Left cardiac atrium (tissue), 4 donors: ENCODE measurements at regions of chr11 and their contacts with region 1.

Region 1: DNA sequence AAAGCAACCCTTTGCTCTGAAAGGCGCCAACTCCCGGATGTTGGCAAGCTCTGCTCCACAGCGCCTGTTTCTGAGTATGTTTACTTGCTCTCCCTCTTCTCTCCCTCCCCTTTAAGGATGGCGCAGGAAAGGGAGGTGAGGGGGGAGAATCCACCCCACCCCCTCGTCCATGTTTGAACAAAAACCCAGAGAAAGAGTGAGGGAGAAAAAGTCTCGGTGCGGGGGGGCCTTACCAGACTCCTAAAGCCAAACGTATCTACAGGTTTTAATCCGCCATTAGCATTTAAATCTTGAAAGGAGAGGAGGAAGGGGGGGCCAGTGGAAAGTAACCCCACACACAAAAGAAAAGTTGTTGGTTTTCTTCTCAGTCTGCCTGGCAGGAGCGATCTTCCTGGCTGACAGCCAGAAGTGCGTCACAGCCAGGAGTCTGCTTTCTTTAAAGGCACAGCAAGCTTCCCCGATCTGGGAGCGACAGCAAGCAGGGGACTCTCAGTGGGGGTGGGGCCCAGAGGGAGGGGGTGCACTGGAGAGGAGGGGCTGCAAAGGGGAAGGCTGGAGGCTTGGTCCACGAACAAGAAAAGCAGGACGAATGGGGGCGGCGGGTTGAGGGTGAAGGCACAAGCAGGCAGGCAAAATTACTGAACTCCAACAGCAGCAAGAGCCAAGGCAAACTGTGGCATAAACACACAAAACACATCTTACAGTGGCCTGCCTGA is 39.5 kb downstream of the NUMA1 start:
- DNase-seq: peak; percentile 96
- ATAC-seq: peak; percentile 87 to 88

Region 2: GRCh38 chr11:71991494-71991893 is 49.4 kb before region 1 on chr11:
- intact Hi-C with region 1: no loop called
- DNase-seq: no peak
- ATAC-seq: peak in 1 of 2 donors; percentile 14

Region 3: DNA sequence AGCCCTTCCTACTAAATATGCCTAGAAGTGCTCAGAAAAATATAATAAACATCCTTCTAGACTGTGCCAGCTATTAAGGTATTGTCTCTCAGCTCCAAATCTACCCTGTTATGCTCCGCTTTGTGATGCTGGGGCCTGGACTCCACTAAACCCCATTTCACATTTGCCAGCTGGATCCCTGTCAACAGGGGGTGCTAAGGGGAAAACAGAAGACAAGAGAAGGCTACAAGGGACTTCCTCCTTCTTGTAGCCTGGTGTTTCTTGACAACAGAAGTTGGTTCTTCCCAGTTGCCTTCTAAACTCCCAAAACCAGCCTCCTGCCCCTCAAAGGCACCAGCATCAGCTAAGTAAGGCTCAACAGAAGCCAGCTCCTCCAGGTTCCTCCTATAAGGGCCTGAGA is 34.2 kb after region 1 on chr11:
- intact Hi-C with region 1: loop called in 1 of 2 experiments (anchors 5 kb)
- DNase-seq: no peak
- ATAC-seq: no peak

Region 4: GRCh38 chr11:72102946-72103753 is 62.3 kb after region 1 on chr11 and contains the start of gene LAMTOR1:
- intact Hi-C with region 1: loop called in 1 of 2 experiments (anchors 2 kb)
- DNase-seq: peak; percentile 100
- ATAC-seq: peak; percentile 99 to 100
- total RNA-seq, gene LAMTOR1: 76.4 to 88.0 TPM

Region 5: GRCh38 chr11:72222907-72223614 is 182.2 kb after region 1 on chr11:
- intact Hi-C with region 1: loop called in 1 of 2 experiments (anchors 5 kb)
- DNase-seq: peak; percentile 96
- ATAC-seq: peak; percentile 88 to 91